ENCODE measurements at regions of chr10 and their contacts with region 1.

Region 1: GRCh38 chr10:14648005-14648765 is 126.5 kb downstream of the FAM107B start:
- DNase-seq: peak; percentile 39 to 88 (median 69)
- ATAC-seq: peak; percentile 87 to 95 (median 92)
- H3K4me3 ChIP-seq: peak overlapping the region; percentile 39 to 75
- H3K4me3 Mint-ChIP-seq: peak overlapping the region; percentile 78 to 85 (median 79)
- H3K27ac ChIP-seq: peak overlapping the region; percentile 99
- H3K27ac Mint-ChIP-seq: peak overlapping the region; percentile 96 to 99
- H3K4me1 ChIP-seq: peaks cover 32 to 48% of the 10 kb centered on the region in 2 experiments
- H3K4me1 Mint-ChIP-seq: peaks cover 61 to 82% (median 81%) of the 10 kb centered on the region in 3 donors
- H3K27me3 ChIP-seq: no peaks in the 10 kb centered on the region
- H3K27me3 Mint-ChIP-seq: no peaks in the 10 kb centered on the region

Region 2: GRCh38 chr10:14787938-14788337 is 139.8 kb after region 1 on chr10:
- CTCF ChIA-PET with region 1: no interaction called
- POLR2A ChIA-PET with region 1: interaction called in 1 of 2 experiments, 10 read pairs
- DNase-seq: no peak
- ATAC-seq: no peak
- H3K4me3 ChIP-seq: no peak overlapping the region
- H3K4me3 Mint-ChIP-seq: no peak overlapping the region
- H3K27ac ChIP-seq: no peak overlapping the region
- H3K27ac Mint-ChIP-seq: no peak overlapping the region
- H3K4me1 ChIP-seq: no peaks in the 10 kb centered on the region
- H3K4me1 Mint-ChIP-seq: peaks cover 0 to under 1% (median under 1%) of the 10 kb centered on the region in 3 donors
- H3K27me3 ChIP-seq: peaks cover 0 to 3% of the 10 kb centered on the region in 2 experiments
- H3K27me3 Mint-ChIP-seq: peaks cover 0 to 2% of the 10 kb centered on the region in 2 donors